ENCODE measurements at regions of chr18 and their contacts with region 1.

Region 1: DNA sequence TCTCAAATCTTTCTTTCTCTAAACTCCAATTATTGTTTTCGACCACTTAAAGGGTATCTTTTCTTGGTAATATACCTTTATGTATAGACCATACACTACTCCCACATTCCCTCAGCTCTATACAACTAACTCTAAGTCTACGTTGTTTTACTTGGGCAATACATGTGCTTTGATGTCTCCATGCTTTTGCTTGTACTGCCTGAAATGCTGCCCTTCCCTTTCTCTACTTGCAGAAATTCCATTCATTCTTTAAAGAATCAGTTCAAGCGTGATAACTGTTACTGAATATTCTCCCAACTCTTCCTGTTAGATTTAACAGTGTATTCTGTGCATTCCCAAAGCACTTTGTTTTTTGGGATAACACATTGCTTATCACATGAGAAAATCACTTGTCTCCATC is 157.0 kb upstream of the AQP4 start:
- DNase-seq: no peak
- ATAC-seq: no peak
- H3K4me3 ChIP-seq: no peak overlapping the region
- H3K27ac ChIP-seq: no peak overlapping the region
- H3K4me1 ChIP-seq: no peaks in the 10 kb centered on the region
- H3K27me3 ChIP-seq: no peaks in the 10 kb centered on the region
- CTCF ChIP-seq: no peak

Region 2: DNA sequence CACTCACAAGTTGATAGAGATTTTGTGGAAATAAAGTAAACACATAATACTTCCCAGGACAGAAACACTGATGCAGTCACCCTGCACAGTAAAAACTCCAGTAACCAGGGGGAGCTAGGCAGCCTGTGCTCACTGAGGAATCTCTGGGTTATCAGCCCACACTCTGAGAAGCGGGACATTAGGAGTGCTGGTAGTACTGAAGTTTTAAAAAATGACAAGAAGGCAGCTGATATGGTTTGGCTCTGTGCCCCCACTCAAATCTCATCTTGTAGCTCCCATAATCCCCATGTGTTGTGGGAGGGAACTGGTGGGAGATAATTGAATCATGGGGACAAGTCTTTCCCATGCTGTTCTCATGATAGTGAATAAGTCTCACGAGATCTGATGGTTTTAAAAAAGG is 505.5 kb before region 1 on chr18:
- intact Hi-C with region 1: no loop called
- DNase-seq: no peak
- ATAC-seq: peak in 1 of 4 donors; percentile 42
- H3K4me3 ChIP-seq: no peak overlapping the region
- H3K27ac ChIP-seq: no peak overlapping the region
- H3K4me1 ChIP-seq: no peaks in the 10 kb centered on the region
- H3K27me3 ChIP-seq: no peaks in the 10 kb centered on the region
- CTCF ChIP-seq: no peak

Region 3: GRCh38 chr18:26963292-26963691 is 59.2 kb before region 1 on chr18:
- intact Hi-C with region 1: no loop called
- DNase-seq: no peak
- ATAC-seq: peak in 2 of 4 donors; percentile 38 to 73
- H3K4me3 ChIP-seq: no peak overlapping the region
- H3K27ac ChIP-seq: no peak overlapping the region
- H3K4me1 ChIP-seq: no peaks in the 10 kb centered on the region
- H3K27me3 ChIP-seq: no peaks in the 10 kb centered on the region
- CTCF ChIP-seq: no peak

Region 4: GRCh38 chr18:27073404-27073830 is 51.0 kb after region 1 on chr18:
- intact Hi-C with region 1: no loop called
- DNase-seq: no peak
- ATAC-seq: no peak
- H3K4me3 ChIP-seq: no peak overlapping the region
- H3K27ac ChIP-seq: no peak overlapping the region
- H3K4me1 ChIP-seq: no peaks in the 10 kb centered on the region
- H3K27me3 ChIP-seq: no peaks in the 10 kb centered on the region
- CTCF ChIP-seq: no peak

Region 5: GRCh38 chr18:27276479-27277255 is 254.2 kb after region 1 on chr18:
- intact Hi-C with region 1: loop called in 1 of 3 experiments (anchors 10 kb)
- DNase-seq: no peak
- ATAC-seq: no peak
- H3K4me3 ChIP-seq: no peak overlapping the region
- H3K27ac ChIP-seq: no peak overlapping the region
- H3K4me1 ChIP-seq: no peaks in the 10 kb centered on the region
- H3K27me3 ChIP-seq: no peaks in the 10 kb centered on the region
- CTCF ChIP-seq: no peak